ENCODE measurements at regions of chr2 and their contacts with region 1.

Region 1: GRCh38 chr2:38264396-38265281 is 112.4 kb downstream of the ATL2 start:
- DNase-seq: no peak
- H3K4me3 Mint-ChIP-seq: no peak overlapping the region
- H3K27ac Mint-ChIP-seq: peak overlapping the region; percentile 33
- H3K4me1 Mint-ChIP-seq: peaks cover 39% of the 10 kb centered on the region
- H3K27me3 Mint-ChIP-seq: no peaks in the 10 kb centered on the region

Region 2: GRCh38 chr2:37890893-37891495 is 373.6 kb before region 1 on chr2:
- intact Hi-C with region 1: loop called (anchors 10 kb)
- DNase-seq: peak; percentile 26
- H3K4me3 Mint-ChIP-seq: no peak overlapping the region
- H3K27ac Mint-ChIP-seq: no peak overlapping the region
- H3K4me1 Mint-ChIP-seq: peaks cover 14% of the 10 kb centered on the region
- H3K27me3 Mint-ChIP-seq: peaks cover 16% of the 10 kb centered on the region

Measured in activated T-helper 2 cell treated with anti-CD3 and anti-CD28 coated beads, Interferon-gamma antibody, Interleukin-2, Interleukin-4, amounts not matched to agents 10 μg/mL and 5 μg/mL and 100 μg/mL, durations not matched to agents 14 hours and 24 hours and 36 hours (primary cell).